HepG2 (cell line): ENCODE measurements at regions of chr12 and their contacts with region 1.

Region 1: DNA sequence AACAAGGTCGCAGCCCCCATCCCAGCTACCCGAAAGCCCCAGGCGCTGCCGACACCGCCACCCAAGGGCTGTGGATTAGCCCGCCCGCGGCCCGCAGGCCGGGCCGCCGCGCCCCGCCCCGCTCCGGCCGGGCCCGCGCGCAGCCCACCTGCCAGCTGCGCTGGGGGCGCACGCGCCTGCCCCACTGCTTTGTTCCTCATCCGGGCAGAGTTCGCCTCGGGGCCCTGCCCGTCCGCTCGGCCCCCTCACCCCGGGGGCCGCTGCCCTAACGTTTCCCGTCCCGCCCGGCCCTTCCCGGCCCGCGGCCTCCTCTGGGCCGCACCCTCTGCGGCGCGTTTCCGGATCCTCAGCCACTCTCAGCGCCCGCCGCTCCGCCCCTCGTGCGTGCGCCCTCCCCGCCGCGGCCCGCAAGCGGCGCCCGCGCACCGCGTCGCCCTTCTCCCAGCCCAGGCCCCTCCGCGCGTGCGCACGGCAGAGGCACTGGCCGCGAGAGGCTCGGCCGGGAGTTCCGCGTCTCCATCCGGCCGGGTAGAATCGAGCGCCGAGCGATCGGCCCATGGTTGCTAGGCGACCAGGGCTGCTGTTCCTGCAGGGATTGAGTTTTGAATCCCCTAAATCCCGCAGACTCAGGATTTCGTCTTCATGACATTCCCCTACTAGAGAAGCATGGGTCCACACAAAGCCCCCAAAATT is at the start of gene PRDM4:
- DNase-seq: peak; percentile 84
- ATAC-seq: peak; percentile 98
- H3K4me3 ChIP-seq: peak within 1 kb of the TSS; percentile 80 to 90 (median 85)
- H3K27ac ChIP-seq: peak within 1 kb of the TSS; percentile 64
- H3K4me1 ChIP-seq: peaks cover 32% of the 10 kb centered on the region
- H3K27me3 ChIP-seq: peaks cover 0 to 1% of the 10 kb centered on the region in 2 experiments; a peak in 1 of 5 replicates
- CTCF ChIP-seq: peak; percentile 79
- EP300 ChIP-seq: no peak
- POLR2A ChIP-seq: peak; percentile 79 to 93
- RAD21 ChIP-seq: peak; percentile 98
- total RNA-seq, gene PRDM4: 15.3 and 16.1 TPM in 2 replicates

Region 2: DNA sequence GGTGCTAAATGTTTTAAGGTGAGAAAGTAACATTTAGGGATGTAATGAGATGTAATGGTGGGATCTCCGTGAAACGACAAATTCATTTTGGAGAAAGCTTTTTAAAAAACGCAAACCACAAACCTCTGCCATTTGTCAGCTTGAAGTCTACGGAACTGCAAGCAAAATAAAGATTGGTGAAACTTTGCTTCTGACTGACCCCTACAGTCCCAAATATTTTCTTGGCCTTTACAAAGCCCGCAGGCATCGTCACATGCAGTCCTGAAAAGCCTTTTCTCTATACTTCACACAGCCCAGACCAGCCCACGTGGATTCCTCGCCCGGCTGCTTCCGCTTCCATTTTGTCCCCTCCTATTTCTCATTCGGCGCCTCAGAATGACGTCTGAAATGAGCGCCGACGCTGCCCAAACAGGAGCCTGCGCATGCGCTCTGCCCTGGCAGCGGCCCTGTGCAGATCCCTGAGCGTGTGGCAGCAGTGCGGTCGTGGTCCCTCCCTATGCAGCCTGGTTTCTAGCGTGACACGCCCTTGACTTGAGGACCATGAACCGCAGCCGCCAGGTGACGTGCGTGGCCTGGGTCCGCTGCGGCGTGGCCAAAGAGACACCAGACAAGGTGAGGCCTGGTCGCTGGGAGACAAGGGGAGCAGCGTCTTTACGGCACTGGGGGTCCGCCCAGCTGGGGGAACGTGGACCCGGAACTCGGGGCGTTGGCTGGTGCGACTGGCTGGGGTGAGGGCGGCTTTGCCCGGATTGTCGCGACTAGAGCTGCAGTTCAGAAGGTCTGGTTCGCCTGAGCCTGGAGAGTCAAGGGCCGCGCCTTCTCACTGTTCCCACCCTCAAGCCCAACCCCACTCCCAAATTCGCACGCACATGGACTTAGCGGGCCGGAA is 75.4 kb before region 1 on chr12 and contains the start of gene PWP1:
- CTCF ChIA-PET with region 1: no interaction called
- POLR2A ChIA-PET with region 1: no interaction called
- in situ Hi-C with region 1: no loop called
- intact Hi-C with region 1: loop called (anchors 5 kb)
- DNase-seq: peak; percentile 94
- ATAC-seq: peak; percentile 78
- H3K4me3 ChIP-seq: peak within 1 kb of the TSS; percentile 74 to 98 (median 95)
- H3K27ac ChIP-seq: peak within 1 kb of the TSS; percentile 100
- H3K4me1 ChIP-seq: peaks cover 52% of the 10 kb centered on the region
- H3K27me3 ChIP-seq: no peaks in the 10 kb centered on the region; a peak in 3 of 5 replicates
- CTCF ChIP-seq: peak; percentile 49
- EP300 ChIP-seq: peak in 1 of 2 experiments; percentile 30; a peak in 2 of 4 replicates
- POLR2A ChIP-seq: peak in 1 of 2 experiments; percentile 93
- RAD21 ChIP-seq: 0 out of 2 replicates have a peak, but pooled peaks have one; percentile 12
- total RNA-seq, gene PWP1: 70.2 and 123 TPM in 2 replicates

Region 3: GRCh38 chr12:107702106-107702505 is 58.8 kb before region 1 on chr12:
- CTCF ChIA-PET with region 1: no interaction called
- POLR2A ChIA-PET with region 1: no interaction called
- in situ Hi-C with region 1: no loop called
- intact Hi-C with region 1: loop called (anchors 2 kb)
- DNase-seq: no peak
- ATAC-seq: no peak
- H3K4me3 ChIP-seq: no peak overlapping the region
- H3K27ac ChIP-seq: no peak overlapping the region
- H3K4me1 ChIP-seq: no peaks in the 10 kb centered on the region
- H3K27me3 ChIP-seq: no peaks in the 10 kb centered on the region; a peak in 1 of 5 replicates
- CTCF ChIP-seq: no peak
- EP300 ChIP-seq: no peak
- POLR2A ChIP-seq: no peak
- RAD21 ChIP-seq: no peak

Region 4: GRCh38 chr12:107884769-107885694 is 124.1 kb after region 1 on chr12:
- CTCF ChIA-PET with region 1: interaction called, 13 read pairs
- POLR2A ChIA-PET with region 1: no interaction called
- in situ Hi-C with region 1: loop called (anchors 5 kb)
- intact Hi-C with region 1: loop called (anchors 1 kb)
- DNase-seq: peak; percentile 58
- ATAC-seq: peak; percentile 92
- H3K4me3 ChIP-seq: no peak overlapping the region
- H3K27ac ChIP-seq: no peak overlapping the region
- H3K4me1 ChIP-seq: no peaks in the 10 kb centered on the region
- H3K27me3 ChIP-seq: peaks cover 0 to 7% of the 10 kb centered on the region in 2 experiments; a peak in 2 of 5 replicates
- CTCF ChIP-seq: peak; percentile 86
- EP300 ChIP-seq: no peak
- POLR2A ChIP-seq: no peak
- RAD21 ChIP-seq: peak; percentile 79

Region 5: DNA sequence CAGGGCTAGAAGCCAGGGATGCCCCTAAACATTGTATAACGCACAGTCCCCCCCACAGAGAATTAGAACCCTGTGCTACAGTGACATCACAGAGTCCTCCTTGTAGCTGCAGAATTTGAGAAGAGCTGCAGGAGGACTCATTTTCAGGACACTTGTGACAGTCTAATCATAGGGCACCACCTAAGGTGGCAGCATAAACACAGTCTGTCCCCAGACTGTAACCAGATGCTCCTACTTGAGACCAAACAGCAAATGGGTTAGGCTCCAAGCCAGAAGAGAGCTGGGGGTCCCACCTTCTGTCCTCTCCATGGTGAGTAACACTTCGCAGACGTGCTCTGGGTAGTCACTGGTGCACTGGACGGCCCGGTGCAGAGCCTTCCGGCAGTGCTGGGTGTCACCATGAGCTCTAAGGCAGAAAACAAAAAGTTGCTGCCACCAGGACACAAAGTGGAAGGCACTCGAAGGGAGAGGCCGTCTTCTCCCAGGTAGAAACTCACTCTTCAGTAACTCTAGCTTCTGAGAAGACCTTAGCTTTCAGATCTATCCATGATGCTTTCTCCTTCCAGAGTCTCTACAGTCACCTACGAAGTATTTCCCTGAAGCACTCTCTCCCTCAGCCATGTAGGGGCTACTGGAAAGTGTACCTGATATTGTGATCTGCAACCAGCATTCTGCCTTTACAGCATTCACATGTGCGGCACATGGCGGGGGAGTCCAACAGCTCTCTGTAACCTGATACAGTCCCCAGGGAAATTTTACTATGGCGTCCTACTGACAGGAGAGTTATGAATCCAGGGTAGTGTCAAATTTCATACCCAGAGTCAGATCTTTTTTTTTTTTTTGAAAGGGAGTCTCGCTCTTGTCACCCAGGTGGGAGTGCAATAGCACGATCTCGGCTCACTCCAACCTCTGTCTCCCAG is 771.2 kb after region 1 on chr12:
- CTCF ChIA-PET with region 1: no interaction called
- POLR2A ChIA-PET with region 1: no interaction called
- in situ Hi-C with region 1: no loop called
- intact Hi-C with region 1: loop called (anchors 10 kb)
- DNase-seq: no peak
- ATAC-seq: no peak
- H3K4me3 ChIP-seq: no peak overlapping the region
- H3K27ac ChIP-seq: no peak overlapping the region
- H3K4me1 ChIP-seq: no peaks in the 10 kb centered on the region
- H3K27me3 ChIP-seq: no peaks in the 10 kb centered on the region
- CTCF ChIP-seq: no peak
- EP300 ChIP-seq: no peak
- POLR2A ChIP-seq: no peak
- RAD21 ChIP-seq: no peak